Activated CD8-positive, alpha-beta T cell treated with anti-CD3 and anti-CD28 coated beads for 36 hours (primary cell): ENCODE measurements at regions of chrX and their contacts with region 1.

Region 1: DNA sequence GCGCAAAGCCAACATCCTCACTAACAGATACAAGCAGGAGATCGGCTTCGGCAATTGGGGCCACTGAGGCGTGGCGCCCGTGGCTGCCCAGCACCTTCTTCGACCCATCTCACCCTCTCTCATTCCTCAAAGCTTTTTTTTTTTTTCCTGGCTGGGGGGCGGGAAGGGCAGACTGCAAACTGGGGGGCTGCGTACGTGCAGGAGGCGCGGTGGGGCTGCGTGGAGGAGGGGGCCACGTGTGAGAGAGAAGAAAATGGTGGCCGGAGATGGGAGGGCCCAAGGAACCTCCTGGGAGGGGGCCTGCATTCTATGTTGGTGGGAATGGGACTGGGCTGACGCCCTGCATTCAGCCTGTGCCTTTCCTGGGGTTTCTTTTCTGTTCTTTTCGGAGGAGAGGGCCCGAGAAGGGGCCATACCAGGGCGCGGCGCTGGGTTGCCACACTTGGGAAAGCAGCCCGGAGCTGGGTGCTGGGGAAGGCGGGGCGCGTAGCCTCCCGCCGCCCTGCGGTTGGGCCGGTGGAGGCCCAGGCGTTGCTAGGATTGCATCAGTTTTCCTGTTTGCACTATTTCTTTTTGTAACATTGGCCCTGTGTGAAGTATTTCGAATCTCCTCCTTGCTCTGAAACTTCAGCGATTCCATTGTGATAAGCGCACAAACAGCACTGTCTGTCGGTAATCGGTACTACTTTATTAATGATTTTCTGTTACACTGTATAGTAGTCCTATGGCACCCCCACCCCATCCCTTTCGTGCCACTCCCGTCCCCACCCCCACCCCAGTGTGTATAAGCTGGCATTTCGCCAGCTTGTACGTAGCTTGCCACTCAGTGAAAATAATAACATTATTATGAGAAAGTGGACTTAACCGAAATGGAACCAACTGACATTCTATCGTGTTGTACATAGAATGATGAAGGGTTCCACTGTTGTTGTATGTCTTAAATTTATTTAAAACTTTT is 4.5 kb downstream of the MID1IP1 start:
- DNase-seq: peak; percentile 71
- ATAC-seq: peak; percentile 13
- H3K4me3 Mint-ChIP-seq: peak overlapping the region; percentile 97
- H3K27ac Mint-ChIP-seq: peak overlapping the region; percentile 98
- H3K4me1 Mint-ChIP-seq: peaks cover 21% of the 10 kb centered on the region
- H3K27me3 Mint-ChIP-seq: no peaks in the 10 kb centered on the region
- CTCF ChIP-seq: no peak

Region 2: DNA sequence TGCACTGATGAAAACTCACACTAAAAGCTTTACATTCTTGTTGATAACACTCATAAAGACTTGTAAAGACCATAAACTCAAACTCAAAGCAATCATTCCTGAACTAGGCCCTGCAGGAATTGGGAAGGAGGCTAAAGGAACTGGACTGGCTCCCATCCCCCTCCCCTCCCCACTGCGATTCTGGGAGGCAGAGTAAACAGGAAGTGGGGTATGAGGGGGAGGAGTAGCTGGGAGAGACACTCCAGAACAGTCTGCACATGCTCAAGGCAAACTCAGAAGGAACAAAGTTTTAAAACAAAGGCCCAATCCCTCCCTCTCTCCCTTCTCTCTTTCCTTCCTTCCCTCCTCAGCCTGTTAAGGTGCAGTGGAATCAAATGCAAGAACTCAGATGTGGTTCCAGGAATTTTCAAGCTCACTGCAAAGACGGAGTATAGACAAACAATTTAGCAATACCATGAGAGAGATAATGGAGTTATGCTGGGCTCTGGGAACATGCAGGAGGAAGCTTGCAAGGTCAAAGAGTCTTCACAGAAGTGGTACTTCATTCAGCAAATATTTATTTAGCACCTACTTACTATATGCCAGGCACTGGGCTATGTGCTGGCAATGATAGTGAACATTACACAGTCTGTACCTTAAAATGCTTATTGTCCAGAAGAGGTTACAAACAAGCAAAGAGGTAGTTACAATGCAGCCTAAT is 11.4 kb after region 1 on chrX:
- CTCF ChIA-PET with region 1: no interaction called
- POLR2A ChIA-PET with region 1: interaction called, 18 read pairs
- intact Hi-C with region 1: no loop called
- DNase-seq: no peak
- ATAC-seq: no peak
- H3K4me3 Mint-ChIP-seq: no peak overlapping the region
- H3K27ac Mint-ChIP-seq: no peak overlapping the region
- H3K4me1 Mint-ChIP-seq: peaks cover 19% of the 10 kb centered on the region
- H3K27me3 Mint-ChIP-seq: no peaks in the 10 kb centered on the region
- CTCF ChIP-seq: no peak

Region 3: GRCh38 chrX:38929966-38930421 is 124.3 kb after region 1 on chrX:
- CTCF ChIA-PET with region 1: no interaction called
- POLR2A ChIA-PET with region 1: no interaction called
- intact Hi-C with region 1: no loop called
- DNase-seq: no peak
- ATAC-seq: no peak
- H3K4me3 Mint-ChIP-seq: no peak overlapping the region
- H3K27ac Mint-ChIP-seq: no peak overlapping the region
- H3K4me1 Mint-ChIP-seq: no peaks in the 10 kb centered on the region
- H3K27me3 Mint-ChIP-seq: no peaks in the 10 kb centered on the region
- CTCF ChIP-seq: no peak